ENCODE measurements at regions of chr21 and their contacts with region 1.

Region 1: DNA sequence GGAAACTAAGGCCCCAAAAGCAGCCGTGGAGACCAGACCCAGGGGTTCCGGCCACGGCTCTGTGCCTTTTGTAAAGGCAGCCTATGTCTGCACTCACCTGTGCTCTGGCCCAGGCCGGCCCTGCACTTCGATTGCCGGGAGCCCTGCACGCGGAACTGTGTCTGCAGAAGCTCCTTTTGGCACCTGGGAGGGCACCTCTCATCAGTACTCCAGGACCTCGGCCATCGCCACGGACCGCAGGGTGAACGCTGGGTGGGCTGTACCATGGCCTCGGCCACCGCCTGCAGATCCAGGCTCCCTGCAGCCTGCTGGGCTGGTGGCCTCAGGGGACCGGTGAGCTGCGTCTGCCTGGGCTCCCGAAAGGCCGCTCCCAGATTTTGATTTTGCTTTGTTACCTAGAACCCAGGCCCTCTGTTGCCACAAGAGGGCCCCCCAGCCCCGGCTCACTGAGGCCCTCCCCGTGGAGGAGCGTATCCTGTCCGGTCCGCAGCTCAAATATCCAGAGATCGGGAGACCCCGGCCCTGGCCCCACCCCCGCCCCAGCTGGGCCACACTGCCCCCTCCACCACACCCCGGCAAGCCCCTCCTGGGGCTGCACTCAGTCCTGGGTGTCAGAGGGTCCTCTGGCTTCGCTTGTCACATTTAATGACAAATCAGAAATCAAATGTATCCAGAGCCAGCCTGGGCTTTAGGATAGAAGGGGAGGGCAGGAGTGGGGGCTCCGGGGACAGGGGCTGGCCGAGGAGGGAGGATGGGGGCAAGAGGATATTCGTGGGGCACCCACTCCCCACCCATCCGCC is 60.2 kb upstream of the PDE9A start:
- DNase-seq: peak; percentile 75
- H3K4me3 Mint-ChIP-seq: no peak overlapping the region
- H3K27ac Mint-ChIP-seq: no peak overlapping the region
- H3K4me1 Mint-ChIP-seq: peaks cover 10% of the 10 kb centered on the region
- H3K27me3 Mint-ChIP-seq: peaks cover 6% of the 10 kb centered on the region

Region 2: GRCh38 chr21:42818328-42818749 is 225.1 kb after region 1 on chr21:
- CTCF ChIA-PET with region 1: interaction called, 34 read pairs
- POLR2A ChIA-PET with region 1: no interaction called
- DNase-seq: peak; percentile 63
- H3K4me3 Mint-ChIP-seq: no peak overlapping the region
- H3K27ac Mint-ChIP-seq: no peak overlapping the region
- H3K4me1 Mint-ChIP-seq: no peaks in the 10 kb centered on the region
- H3K27me3 Mint-ChIP-seq: peaks cover 14% of the 10 kb centered on the region

Region 3: GRCh38 chr21:42833439-42833815 is 240.2 kb after region 1 on chr21:
- CTCF ChIA-PET with region 1: interaction called, 23 read pairs
- POLR2A ChIA-PET with region 1: no interaction called
- DNase-seq: peak; percentile 73
- H3K4me3 Mint-ChIP-seq: peak overlapping the region; percentile 3
- H3K27ac Mint-ChIP-seq: no peak overlapping the region
- H3K4me1 Mint-ChIP-seq: peaks cover 35% of the 10 kb centered on the region
- H3K27me3 Mint-ChIP-seq: peaks cover 21% of the 10 kb centered on the region

Measured in activated CD4-positive, alpha-beta memory T cell treated with anti-CD3 and anti-CD28 coated beads, Interleukin-2, amount 10 ng/mL, durations not matched to agents 7 days and 5 days (primary cell).